ENCODE measurements at regions of chr5 and their contacts with region 1.

Region 1: DNA sequence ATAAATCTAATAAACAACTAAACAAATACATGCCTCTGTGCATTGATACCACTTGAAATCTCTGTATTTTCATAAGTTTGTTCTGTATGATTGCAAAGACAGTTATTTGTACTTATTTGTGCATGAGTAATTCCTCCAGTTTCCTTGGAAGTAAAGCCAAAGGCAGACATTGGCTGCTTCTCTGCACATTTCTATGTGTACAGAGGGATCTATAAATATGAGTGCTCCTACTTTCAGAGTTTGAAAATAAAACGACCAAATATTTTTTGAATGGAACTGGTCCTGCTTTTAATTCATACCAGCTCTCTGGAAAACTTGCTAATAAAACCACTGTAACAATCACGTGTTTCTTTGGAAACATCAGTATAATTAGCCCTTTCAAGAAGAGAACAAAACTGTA is 306.5 kb downstream of the MAN2A1 start:
- DNase-seq: no peak
- ATAC-seq: no peak
- H3K4me3 ChIP-seq: no peak overlapping the region
- H3K27ac ChIP-seq: peak overlapping the region in 1 of 2 donors; percentile 49
- H3K4me1 ChIP-seq: peaks cover 7 to 21% of the 10 kb centered on the region in 2 donors
- H3K27me3 ChIP-seq: no peaks in the 10 kb centered on the region

Region 2: GRCh38 chr5:110038297-110038997 is 42.2 kb after region 1 on chr5:
- intact Hi-C with region 1: loop called in 1 of 2 experiments (anchors 5 kb)
- DNase-seq: peak in 1 of 2 donors; percentile 49
- ATAC-seq: peak; percentile 84
- H3K4me3 ChIP-seq: no peak overlapping the region
- H3K27ac ChIP-seq: peak overlapping the region in 1 of 2 donors; percentile 84
- H3K4me1 ChIP-seq: peaks cover 0 to 7% of the 10 kb centered on the region in 2 donors
- H3K27me3 ChIP-seq: no peaks in the 10 kb centered on the region